BJ (cell line): ENCODE measurements at regions of chr15 and their contacts with region 1.

Region 1: DNA sequence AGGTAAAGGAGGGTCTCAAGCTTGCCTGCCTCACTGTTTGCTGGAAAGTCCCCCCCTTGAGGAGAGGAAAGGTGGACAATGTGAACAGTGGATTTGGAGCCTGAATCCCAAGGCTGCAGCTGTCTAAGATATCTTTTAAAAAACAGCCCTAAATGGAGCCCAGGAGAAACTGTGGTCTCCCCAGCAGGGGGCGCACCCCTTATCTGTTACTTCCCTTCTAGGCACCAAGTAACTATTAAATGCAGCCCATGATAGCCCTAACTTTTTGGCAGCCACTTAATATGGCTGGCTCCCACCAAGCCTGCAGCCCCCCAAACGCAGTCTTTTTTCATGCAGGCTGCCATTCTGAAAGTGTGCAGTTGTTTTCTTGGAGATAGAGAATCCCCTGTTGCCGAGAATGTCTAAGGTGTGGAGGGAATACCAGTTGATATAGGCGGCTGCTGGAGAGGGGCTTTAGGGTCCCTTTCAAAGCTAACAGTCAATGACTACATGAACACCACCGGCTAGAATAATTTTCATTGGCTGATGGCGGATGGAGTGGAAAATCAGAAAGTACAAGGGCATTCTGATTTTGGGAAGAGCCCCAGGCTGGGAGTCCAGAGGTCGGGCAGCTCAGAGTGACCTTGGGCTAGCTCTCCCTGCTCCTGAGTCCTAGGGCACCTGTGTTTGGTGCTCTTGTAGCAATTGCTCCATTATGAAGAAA is 1.3 kb downstream of the RHCG start:
- DNase-seq: no peak
- H3K4me3 ChIP-seq: no peak overlapping the region
- H3K27me3 ChIP-seq: peaks cover 36% of the 10 kb centered on the region
- CTCF ChIP-seq: peak; percentile 52

Region 2: DNA sequence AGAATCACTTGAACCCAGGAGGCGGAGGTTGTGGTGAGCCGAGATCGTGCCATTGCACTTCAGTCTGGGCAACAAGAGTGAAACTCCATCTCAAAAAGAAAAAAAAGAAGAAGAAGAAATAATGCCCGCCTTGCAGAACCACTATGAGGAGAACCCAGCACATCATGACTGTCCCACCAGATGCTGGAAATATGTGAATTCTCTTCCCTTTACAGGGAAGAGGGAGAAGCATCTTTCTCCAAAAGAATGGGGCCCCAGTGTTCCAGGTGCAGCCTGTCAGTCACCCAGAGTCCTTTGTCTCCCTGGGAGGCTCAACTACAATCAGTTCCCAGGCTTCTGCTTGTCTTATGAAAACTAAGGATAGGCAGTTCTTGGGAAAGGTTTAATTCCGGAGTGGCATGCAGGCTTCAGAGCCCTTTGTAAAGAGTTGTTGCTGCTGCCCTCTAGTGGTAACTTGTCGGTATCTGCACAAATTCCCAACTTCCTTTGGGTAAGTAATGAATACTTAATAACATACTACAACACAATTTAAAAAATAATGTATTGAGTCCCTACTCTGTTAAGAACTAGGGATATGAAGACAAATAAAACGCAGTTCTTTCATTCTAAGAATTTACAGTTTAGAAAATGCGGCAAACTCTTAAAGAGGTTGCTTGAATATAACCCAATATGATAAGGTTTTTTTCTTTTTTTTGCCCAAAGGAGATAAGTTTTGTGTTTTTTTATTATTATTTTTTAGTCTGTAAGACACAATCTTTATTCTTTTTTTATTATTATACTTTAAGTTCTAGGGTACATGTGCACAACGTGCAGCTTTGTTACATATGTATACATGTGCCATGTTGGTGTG is 61.6 kb after region 1 on chr15:
- CTCF ChIA-PET with region 1: interaction called, 18 read pairs
- POLR2A ChIA-PET with region 1: no interaction called
- DNase-seq: peak; percentile 19
- H3K4me3 ChIP-seq: no peak overlapping the region
- H3K27me3 ChIP-seq: peaks cover 11% of the 10 kb centered on the region
- CTCF ChIP-seq: peak; percentile 83